PC-9 (cell line): ENCODE measurements at regions of chr12 and their contacts with region 1.

Region 1: GRCh38 chr12:42639556-42639955 is 50.0 kb upstream of the PRICKLE1 start:
- DNase-seq: no peak
- H3K4me3 ChIP-seq: no peak overlapping the region
- H3K27ac ChIP-seq: no peak overlapping the region
- H3K4me1 ChIP-seq: 0 out of 2 replicates have a peak, but pooled peaks cover 5% of the 10 kb centered on the region
- H3K27me3 ChIP-seq: no peaks in the 10 kb centered on the region
- CTCF ChIP-seq: no peak

Region 2: DNA sequence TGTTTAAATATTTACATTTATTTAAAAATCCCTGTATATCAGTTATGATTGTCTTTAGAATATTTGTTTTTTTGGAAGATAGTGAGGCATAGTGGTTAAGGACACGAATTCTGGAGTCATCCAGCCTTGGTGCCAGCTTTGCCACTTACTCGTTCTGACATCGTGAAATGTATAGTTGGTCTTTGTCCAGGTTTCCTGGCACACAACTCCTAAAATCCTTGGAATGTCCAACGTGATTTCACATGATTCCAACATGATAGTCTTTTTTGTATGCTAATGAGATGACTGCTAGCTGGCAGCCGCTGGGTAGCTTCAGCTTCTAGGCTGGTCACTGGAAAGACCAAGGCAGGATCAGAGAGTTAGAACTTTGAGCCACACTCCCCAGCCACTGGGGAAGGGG is 114.8 kb before region 1 on chr12:
- CTCF ChIA-PET with region 1: interaction called, 11 read pairs
- POLR2A ChIA-PET with region 1: no interaction called
- intact Hi-C with region 1: no loop called
- DNase-seq: no peak
- H3K4me3 ChIP-seq: no peak overlapping the region
- H3K27ac ChIP-seq: no peak overlapping the region
- H3K4me1 ChIP-seq: no peaks in the 10 kb centered on the region
- H3K27me3 ChIP-seq: no peaks in the 10 kb centered on the region
- CTCF ChIP-seq: no peak